ENCODE measurements at regions of chr4 and their contacts with region 1.

Region 1: GRCh38 chr4:144787365-144788258 is 141.7 kb downstream of the HHIP start:
- DNase-seq: no peak
- H3K4me3 Mint-ChIP-seq: no peak overlapping the region
- H3K27ac Mint-ChIP-seq: peak overlapping the region; percentile 36
- H3K4me1 Mint-ChIP-seq: no peaks in the 10 kb centered on the region
- H3K27me3 Mint-ChIP-seq: no peaks in the 10 kb centered on the region
- CTCF ChIP-seq: no peak

Region 2: DNA sequence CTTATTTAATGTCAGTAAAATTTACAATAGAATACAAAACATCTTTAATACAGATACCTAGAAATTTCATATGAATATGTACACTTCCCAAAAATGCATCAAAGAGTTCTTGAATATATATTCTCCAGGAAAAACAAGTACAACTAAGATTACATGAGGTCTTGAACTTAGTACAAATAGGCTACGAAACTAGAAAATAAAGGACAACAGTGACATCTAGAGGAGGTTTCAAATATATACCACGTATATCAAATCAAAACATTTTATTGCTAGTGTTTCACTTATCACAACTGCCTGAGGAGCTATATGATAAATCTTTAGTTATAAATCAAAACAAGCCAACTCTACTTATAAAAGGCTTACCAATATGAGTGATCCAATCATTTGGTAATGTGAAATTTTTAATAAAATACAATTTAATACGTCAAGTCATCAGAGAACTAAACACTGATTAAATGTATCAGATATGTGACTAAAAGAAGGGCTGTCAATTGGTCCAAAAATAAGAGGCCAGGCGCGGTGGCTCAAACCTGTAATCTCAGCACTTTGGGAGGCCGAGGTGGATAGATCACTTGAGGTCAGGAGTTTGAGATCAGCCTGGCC is 273.8 kb after region 1 on chr4:
- CTCF ChIA-PET with region 1: no interaction called
- intact Hi-C with region 1: loop called (anchors 10 kb)
- DNase-seq: no peak
- H3K4me3 Mint-ChIP-seq: no peak overlapping the region
- H3K27ac Mint-ChIP-seq: no peak overlapping the region
- H3K4me1 Mint-ChIP-seq: no peaks in the 10 kb centered on the region
- H3K27me3 Mint-ChIP-seq: no peaks in the 10 kb centered on the region
- CTCF ChIP-seq: no peak